ENCODE measurements at regions of chr6 and their contacts with region 1.

Region 1: DNA sequence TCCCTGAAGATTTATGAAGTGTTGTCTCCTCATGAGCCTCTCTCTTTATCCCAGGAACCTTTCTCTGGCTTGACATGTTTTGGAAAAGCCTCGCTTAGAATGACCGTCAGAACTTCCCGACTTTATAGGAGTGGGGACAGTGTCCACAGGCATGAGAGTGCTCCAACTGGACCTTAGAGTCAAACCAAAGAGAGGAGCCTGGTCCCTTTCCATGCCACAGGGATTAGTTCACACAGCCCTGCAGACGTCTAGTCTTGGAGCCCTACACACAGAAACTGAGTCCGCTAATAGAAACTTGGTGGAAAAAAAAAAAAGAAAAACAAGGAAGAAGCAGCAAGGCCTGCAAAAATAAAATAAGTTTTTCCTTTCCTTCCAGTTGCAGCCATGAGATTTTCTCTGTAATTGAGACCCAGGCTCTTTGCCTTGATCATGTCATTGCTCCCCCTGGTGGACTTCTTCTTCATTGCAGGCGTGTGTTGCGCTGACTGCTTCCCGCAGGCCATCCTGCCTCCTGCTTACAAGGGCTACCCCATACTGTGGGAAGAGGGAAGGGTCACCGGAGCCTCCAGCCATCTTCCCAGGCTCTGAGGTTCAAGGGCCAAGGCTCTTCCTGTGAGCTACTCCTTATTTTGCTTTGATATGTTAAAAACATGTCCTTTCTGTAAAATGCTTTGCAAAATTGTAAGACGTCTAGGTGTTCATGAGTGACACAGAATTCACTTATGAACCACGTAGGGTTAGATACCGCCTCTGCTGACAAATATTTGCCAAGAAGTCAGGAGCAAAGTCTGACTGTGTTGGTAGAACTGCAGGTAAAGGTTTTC is 201.0 kb downstream of the UST start:
- DNase-seq: peak; percentile 88 to 95
- H3K4me3 ChIP-seq: no peak overlapping the region
- H3K27ac ChIP-seq: peak overlapping the region in 1 of 5 donors; percentile 73
- H3K4me1 ChIP-seq: peaks cover 0 to 26% (median 5%) of the 10 kb centered on the region in 4 donors
- H3K27me3 ChIP-seq: no peaks in the 10 kb centered on the region
- CTCF ChIP-seq: peak in 5 of 7 experiments; percentile 75 to 90 (median 87)
- EP300 ChIP-seq: no peak
- POLR2A ChIP-seq: no peak

Region 2: GRCh38 chr6:148451690-148452089 is 496.1 kb before region 1 on chr6:
- intact Hi-C with region 1: no loop called
- DNase-seq: no peak
- H3K4me3 ChIP-seq: no peak overlapping the region
- H3K27ac ChIP-seq: no peak overlapping the region
- H3K4me1 ChIP-seq: no peaks in the 10 kb centered on the region
- H3K27me3 ChIP-seq: no peaks in the 10 kb centered on the region
- CTCF ChIP-seq: no peak
- EP300 ChIP-seq: no peak
- POLR2A ChIP-seq: no peak

Region 3: DNA sequence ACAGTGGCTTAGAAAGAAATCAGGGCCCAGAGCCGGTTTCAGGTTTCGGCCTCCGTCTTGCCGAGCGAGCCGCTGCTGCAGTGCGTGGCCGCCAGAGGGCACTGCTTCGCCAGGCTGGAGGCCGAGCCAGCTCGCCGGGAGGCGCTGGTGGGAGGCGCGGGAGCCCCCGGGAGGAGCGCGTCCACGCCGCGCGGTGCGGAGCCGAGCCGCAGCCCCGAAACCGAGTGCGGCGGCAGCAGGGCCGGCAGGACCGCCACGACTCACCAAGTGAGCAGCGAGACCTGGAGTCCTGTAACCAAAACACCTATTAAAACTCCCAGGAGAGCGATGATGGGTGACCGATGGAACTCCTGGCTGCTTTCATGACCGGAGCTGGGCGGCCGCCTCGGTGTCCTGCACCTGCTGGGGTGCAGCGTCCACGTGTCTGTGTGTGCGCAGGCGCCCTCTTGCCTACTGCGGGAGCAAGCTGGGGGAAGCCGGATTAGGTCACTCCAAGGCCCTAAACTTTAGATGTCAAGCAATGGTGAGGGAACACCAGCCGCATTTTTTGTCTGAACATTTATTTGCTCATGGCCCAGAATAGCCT is 387.9 kb before region 1 on chr6:
- intact Hi-C with region 1: loop called (anchors 10 kb)
- DNase-seq: peak; percentile 80 to 95
- H3K4me3 ChIP-seq: peak overlapping the region; percentile 47 to 60 (median 49)
- H3K27ac ChIP-seq: peak overlapping the region in 2 of 5 donors; percentile 50 to 62
- H3K4me1 ChIP-seq: peaks cover 4 to 11% (median 8%) of the 10 kb centered on the region in 4 donors
- H3K27me3 ChIP-seq: no peaks in the 10 kb centered on the region
- CTCF ChIP-seq: peak in 5 of 7 experiments; percentile 55 to 99 (median 95)
- EP300 ChIP-seq: no peak
- POLR2A ChIP-seq: no peak

Region 4: DNA sequence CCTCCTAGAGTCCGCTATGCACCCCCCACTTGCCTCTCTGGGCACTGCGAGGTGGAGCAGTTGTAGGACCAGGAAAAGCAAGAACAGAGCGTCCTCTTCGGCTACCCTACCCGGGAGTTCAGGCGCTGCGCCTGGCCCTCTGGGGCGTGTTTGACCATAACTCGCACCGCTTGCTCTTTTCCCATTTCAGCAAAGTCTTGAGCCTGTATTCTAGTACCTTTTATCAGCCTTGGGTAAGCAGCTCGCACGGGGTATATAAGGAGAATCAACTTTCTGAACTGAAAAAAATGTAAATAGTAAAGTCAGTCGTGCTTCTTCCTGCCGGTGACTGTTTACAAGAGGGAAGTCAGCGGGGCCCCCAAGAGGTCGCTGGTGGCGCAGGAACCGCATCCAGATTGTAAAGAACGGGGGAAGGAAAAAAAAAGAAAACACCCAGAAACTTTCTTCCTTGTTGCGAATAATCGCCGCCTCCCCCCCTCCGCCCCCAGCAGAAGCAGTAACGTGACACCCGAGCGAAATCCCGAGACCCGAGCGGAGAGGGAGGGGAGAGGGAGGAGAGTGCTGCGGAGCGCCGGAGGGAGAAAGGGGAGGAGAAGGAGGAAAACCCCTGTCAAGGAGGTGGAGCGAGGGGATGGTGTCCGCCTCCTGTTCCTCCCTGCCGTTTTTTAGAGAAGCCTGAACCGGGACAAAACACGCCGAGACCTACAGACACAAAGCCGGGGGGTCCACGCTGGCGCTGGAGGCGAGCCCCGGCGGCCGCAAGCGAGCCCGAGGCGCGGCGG is 201.3 kb before region 1 on chr6 and contains the start of gene UST:
- intact Hi-C with region 1: loop called (anchors 5 kb)
- DNase-seq: peak; percentile 59 to 97
- H3K4me3 ChIP-seq: peak within 1 kb of the TSS; percentile 67 to 89 (median 78)
- H3K27ac ChIP-seq: peak within 1 kb of the TSS; percentile 70 to 86 (median 76)
- H3K4me1 ChIP-seq: peaks cover 15 to 37% (median 31%) of the 10 kb centered on the region in 4 donors
- H3K27me3 ChIP-seq: peaks cover 0 to 24% (median 11%) of the 10 kb centered on the region in 3 donors
- CTCF ChIP-seq: peak in 1 of 7 experiments; percentile 33
- EP300 ChIP-seq: no peak
- POLR2A ChIP-seq: no peak
- total RNA-seq, gene UST: 2.5 to 45.8 (median 16.7) TPM

Region 5: GRCh38 chr6:149454386-149454848 is 506.6 kb after region 1 on chr6:
- intact Hi-C with region 1: no loop called
- DNase-seq: peak; percentile 89 to 96
- H3K4me3 ChIP-seq: peak overlapping the region in 1 of 4 donors; percentile 1
- H3K27ac ChIP-seq: peak overlapping the region; percentile 38 to 80 (median 62)
- H3K4me1 ChIP-seq: peaks cover 36 to 45% (median 43%) of the 10 kb centered on the region in 4 donors
- H3K27me3 ChIP-seq: peaks cover 0 to 15% (median 14%) of the 10 kb centered on the region in 3 donors
- CTCF ChIP-seq: no peak
- EP300 ChIP-seq: peak; percentile 83
- POLR2A ChIP-seq: no peak